ENCODE measurements at regions of chr1 and their contacts with region 1.

Region 1: GRCh38 chr1:235648954-235649367 is 623 bp downstream of the GNG4 start:
- DNase-seq: peak; percentile 75
- H3K4me3 Mint-ChIP-seq: peak overlapping the region; percentile 81
- H3K27ac Mint-ChIP-seq: peak overlapping the region; percentile 40
- H3K4me1 Mint-ChIP-seq: peaks cover 9% of the 10 kb centered on the region
- H3K27me3 Mint-ChIP-seq: peaks cover 31% of the 10 kb centered on the region
- CTCF ChIP-seq: no peak

Region 2: DNA sequence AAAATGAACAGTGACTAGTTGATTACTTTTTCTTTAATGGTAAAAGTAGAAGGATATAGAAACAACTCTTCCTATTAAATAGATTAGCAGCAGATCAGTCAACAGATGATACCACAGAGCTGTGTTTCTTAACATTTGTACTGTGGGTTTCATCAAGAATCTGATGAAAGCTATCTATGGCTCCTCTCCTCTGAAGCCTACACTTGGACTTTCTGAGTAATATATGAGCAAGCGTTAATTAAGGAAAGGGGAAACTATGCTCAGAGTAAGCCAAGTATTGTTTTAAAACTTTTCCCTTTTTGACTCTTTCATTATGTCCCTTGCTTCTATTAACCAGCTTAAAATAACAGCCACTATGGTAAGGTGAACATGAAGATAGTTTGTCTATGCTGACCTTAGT is 331.8 kb before region 1 on chr1:
- CTCF ChIA-PET with region 1: no interaction called
- intact Hi-C with region 1: no loop called
- DNase-seq: no peak
- H3K4me3 Mint-ChIP-seq: no peak overlapping the region
- H3K27ac Mint-ChIP-seq: no peak overlapping the region
- H3K4me1 Mint-ChIP-seq: peaks cover 21% of the 10 kb centered on the region
- H3K27me3 Mint-ChIP-seq: no peaks in the 10 kb centered on the region
- CTCF ChIP-seq: no peak

Region 3: GRCh38 chr1:235504496-235505222 is 144.3 kb before region 1 on chr1:
- CTCF ChIA-PET with region 1: no interaction called
- intact Hi-C with region 1: loop called (anchors 2 kb)
- DNase-seq: peak; percentile 100
- H3K4me3 Mint-ChIP-seq: peak overlapping the region; percentile 88
- H3K27ac Mint-ChIP-seq: peak overlapping the region; percentile 92
- H3K4me1 Mint-ChIP-seq: peaks cover 40% of the 10 kb centered on the region
- H3K27me3 Mint-ChIP-seq: no peaks in the 10 kb centered on the region
- CTCF ChIP-seq: peak; percentile 89

Measured in Calu3 (cell line).